Aorta (tissue), 5 donors: ENCODE measurements at regions of chr12 and their contacts with region 1.

Region 1: DNA sequence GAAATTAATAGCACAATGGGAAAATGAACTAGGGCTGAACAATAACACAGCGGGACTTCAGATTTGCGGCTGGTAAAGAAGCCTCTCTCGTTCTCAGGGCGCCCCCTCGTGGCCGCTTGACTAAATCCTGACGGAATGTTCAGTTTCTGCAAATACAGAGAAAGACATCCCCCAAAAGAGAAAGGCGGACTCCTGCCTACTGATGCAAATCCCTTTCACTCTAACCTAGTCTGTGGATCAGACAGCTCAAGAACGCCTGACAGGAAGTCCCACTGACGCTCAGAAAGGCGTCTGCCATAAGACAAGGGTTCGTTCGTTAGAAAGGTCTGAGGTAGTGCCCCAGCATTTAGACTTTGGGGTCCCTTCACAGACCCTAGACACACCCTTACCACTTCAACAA is 2.5 kb downstream of the NUAK1 start:
- DNase-seq: peak; percentile 90 to 97
- ATAC-seq: peak; percentile 59
- H3K4me3 ChIP-seq: peak overlapping the region; percentile 37 to 80
- H3K27ac ChIP-seq: peak overlapping the region; percentile 81 to 89
- H3K4me1 ChIP-seq: peaks cover 2 to 8% of the 10 kb centered on the region in 2 donors
- H3K27me3 ChIP-seq: no peaks in the 10 kb centered on the region

Region 2: GRCh38 chr12:105420659-105421240 is 715.5 kb before region 1 on chr12:
- intact Hi-C with region 1: loop called (anchors 1 to 5 kb)
- DNase-seq: peak; percentile 79 to 87
- ATAC-seq: peak; percentile 89
- H3K4me3 ChIP-seq: no peak overlapping the region
- H3K27ac ChIP-seq: no peak overlapping the region
- H3K4me1 ChIP-seq: peaks cover 0 to 2% of the 10 kb centered on the region in 2 donors
- H3K27me3 ChIP-seq: no peaks in the 10 kb centered on the region

Region 3: DNA sequence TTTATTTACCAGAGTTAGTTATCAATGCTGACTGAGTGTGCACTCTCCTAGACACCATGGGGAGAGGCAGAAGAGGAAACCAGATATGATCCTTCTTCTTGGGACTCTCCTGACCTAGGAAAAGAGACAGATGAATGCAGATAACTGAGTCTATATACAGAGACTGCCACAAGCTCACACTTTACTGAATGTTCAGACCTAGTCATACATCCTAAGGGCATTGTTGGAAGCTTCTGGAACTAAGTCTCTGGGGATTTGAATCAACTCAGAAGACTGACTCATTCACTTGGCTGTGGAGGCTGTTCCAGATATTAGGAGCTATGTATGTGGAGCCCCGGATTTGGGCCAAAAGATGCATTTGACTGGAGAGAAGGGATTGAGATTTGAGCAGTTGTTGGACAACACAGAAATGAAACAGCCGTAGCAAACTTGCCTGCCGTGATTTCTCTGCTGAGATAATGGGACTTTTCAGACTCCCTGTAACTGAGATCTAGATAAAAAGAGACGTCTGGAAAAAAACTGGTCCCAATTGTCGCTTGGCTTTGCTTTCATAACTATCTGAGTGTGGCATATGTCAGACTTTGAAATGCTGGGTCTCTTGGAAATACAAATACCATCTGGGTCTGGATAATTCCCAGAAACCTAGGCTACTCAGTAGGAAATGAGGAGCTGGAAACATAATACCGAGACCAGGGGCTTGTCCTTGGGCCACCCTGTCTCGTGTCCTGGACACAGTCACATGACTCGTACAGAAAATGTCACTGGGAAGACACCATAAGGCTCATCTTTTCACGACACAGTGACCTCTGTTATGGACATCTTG is 394.3 kb before region 1 on chr12:
- intact Hi-C with region 1: loop called (anchors 5 to 10 kb)
- DNase-seq: peak in 1 of 2 donors; percentile 55
- ATAC-seq: peak; percentile 64
- H3K4me3 ChIP-seq: no peak overlapping the region
- H3K27ac ChIP-seq: peak overlapping the region; percentile 69 to 80
- H3K4me1 ChIP-seq: peaks cover 13 to 16% of the 10 kb centered on the region in 2 donors
- H3K27me3 ChIP-seq: no peaks in the 10 kb centered on the region

Region 4: DNA sequence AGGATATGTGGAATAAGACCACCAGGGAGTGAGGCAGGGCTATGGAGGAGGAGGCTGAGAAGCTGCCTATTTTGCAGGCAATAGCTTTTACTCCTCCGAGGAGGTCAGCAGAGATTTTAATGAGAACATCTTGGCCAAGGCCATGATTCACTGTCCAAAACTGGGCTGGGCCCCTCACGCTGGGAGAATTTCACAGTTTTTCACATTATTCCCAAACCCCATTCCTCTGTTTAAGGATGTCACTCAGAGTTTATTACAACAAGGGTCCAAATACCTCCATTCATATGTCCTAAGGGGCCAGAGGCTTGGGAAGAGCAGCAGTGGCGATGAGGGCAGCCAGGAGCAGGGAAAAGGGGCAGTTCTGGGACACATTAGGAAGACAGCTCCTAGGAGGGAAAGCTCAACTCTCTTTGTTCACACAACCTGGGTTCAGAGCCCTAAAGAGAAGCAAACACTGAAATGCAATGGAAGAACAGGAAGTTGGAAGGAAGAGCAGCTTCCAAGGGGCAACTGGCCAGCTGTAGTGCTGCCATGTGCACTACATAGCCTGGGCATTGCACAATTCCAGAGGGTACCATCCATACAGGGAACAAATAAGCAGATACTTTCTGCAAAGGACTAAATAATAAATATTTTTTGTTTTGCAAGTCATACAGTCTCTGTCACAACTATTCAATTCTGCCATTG is 280.8 kb before region 1 on chr12:
- intact Hi-C with region 1: loop called in 1 of 2 experiments (anchors 5 kb)
- DNase-seq: no peak
- ATAC-seq: no peak
- H3K4me3 ChIP-seq: no peak overlapping the region
- H3K27ac ChIP-seq: no peak overlapping the region
- H3K4me1 ChIP-seq: peaks cover 0 to 3% of the 10 kb centered on the region in 2 donors
- H3K27me3 ChIP-seq: no peaks in the 10 kb centered on the region

Region 5: GRCh38 chr12:105960319-105961083 is 175.8 kb before region 1 on chr12:
- intact Hi-C with region 1: loop called in 1 of 2 experiments (anchors 5 kb)
- DNase-seq: no peak
- ATAC-seq: no peak
- H3K4me3 ChIP-seq: no peak overlapping the region
- H3K27ac ChIP-seq: no peak overlapping the region
- H3K4me1 ChIP-seq: peaks cover 4 to 6% of the 10 kb centered on the region in 2 donors
- H3K27me3 ChIP-seq: no peaks in the 10 kb centered on the region

Region 6: GRCh38 chr12:106123551-106124081 is 12.6 kb before region 1 on chr12:
- intact Hi-C with region 1: no loop called
- DNase-seq: peak; percentile 60 to 84
- ATAC-seq: peak; percentile 58
- H3K4me3 ChIP-seq: no peak overlapping the region
- H3K27ac ChIP-seq: peak overlapping the region; percentile 73 to 96
- H3K4me1 ChIP-seq: peaks cover 10 to 19% of the 10 kb centered on the region in 2 donors
- H3K27me3 ChIP-seq: no peaks in the 10 kb centered on the region

Region 7: GRCh38 chr12:106195621-106196027 is 59.4 kb after region 1 on chr12:
- intact Hi-C with region 1: no loop called
- DNase-seq: peak; percentile 85
- ATAC-seq: peak; percentile 85
- H3K4me3 ChIP-seq: no peak overlapping the region
- H3K27ac ChIP-seq: no peak overlapping the region
- H3K4me1 ChIP-seq: peaks cover 0 to 4% of the 10 kb centered on the region in 2 donors
- H3K27me3 ChIP-seq: no peaks in the 10 kb centered on the region